Cardiac septum (tissue), 1 donor: ENCODE measurements at regions of chr2 and their contacts with region 1.

Region 1: DNA sequence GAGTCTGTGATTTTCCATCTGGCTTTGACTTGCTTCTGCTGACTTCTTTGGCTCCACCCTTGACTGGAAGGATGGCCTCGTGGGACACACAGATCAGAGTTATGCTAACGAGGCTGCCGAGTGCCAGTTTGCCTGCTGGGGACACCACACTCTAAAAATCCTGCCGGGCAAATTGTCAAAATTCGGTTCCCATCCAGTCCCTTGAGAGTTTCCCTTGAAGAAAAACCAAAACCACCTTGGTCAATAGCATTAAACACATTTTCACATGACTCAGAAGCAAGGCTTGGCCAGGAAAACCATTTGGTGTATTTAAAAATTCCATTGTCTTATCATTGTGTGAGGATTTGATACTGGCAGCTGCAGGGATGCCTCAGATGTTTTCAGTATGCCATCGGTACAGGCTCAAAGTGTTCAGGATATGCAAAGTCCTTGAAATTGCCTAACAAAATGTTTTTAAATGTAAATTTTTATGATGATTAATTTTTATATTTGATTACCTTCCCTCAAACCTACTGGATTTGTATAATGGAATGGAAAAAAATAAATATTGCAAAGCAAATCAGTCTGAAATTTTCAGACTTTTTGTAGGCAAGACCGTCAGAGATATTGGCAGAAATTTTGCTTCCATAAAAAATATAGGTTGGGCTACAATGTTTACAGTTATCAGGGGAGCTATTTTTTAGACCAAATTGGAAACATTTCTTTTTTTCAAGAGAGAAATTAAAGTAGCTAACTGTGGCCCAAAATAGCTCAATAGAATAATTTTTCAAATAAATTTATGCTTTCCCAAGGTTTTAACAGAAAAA is 41.6 kb downstream of the KCNE4 start:
- DNase-seq: peak; percentile 83

Region 2: GRCh38 chr2:223297788-223298187 is 204.1 kb after region 1 on chr2:
- intact Hi-C with region 1: no loop called
- DNase-seq: no peak

Region 3: DNA sequence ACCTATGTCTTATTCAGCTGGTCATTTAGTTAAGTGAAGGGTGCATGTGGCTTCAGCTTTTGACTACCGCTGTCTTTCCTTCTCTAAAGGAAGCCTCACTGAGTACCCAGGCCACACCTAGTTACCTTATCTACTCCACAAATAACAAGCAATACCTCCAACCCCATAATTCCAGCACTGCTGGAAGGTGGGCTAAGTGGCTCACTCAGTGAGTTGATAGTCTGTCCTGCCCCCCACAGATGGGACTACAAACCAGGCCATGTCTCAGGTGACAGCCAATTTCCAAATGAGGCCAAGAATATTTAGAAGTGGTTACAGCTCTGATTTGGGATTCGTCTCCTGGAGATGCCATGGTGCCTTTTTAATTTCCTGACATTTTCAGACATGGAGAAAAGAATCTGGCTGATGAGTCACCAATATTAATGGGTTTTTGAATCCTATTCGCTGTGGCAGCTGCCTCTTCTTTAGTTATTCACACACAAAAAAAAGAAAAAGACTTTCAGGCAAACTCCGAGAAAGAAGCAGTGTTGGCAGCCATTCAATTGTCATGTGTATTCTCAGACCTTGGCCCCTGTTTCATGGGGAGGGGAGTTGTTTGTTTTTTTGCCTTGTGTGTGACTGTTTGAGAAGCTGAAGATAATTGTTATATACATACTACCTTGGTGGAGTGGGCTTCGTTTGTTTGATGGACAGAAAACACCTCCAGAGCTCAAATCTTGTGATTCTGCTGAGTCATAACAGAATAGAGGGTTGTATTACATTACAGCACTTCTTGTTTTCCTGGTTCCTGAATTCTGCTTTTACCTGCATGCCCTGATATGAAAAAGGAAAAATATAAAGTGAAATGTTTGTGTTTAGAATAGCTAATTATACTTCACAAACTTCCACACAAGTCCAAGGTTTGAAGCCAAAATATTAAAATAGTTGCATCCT is 444.3 kb after region 1 on chr2:
- intact Hi-C with region 1: loop called (anchors 10 kb)
- DNase-seq: no peak